ENCODE measurements at regions of chr1 and their contacts with region 1.

Region 1: GRCh38 chr1:200302192-200302920 is 107.5 kb downstream of the ZNF281 start:
- DNase-seq: no peak
- ATAC-seq: no peak
- H3K4me3 ChIP-seq: peak overlapping the region; percentile 46 to 62 (median 56)
- H3K27ac ChIP-seq: no peak overlapping the region
- H3K4me1 ChIP-seq: peaks cover 0 to 4% of the 10 kb centered on the region in 2 donors
- H3K27me3 ChIP-seq: peaks cover 5 to 17% (median 15%) of the 10 kb centered on the region in 3 donors
- CTCF ChIP-seq: no peak
- POLR2A ChIP-seq: no peak

Region 2: DNA sequence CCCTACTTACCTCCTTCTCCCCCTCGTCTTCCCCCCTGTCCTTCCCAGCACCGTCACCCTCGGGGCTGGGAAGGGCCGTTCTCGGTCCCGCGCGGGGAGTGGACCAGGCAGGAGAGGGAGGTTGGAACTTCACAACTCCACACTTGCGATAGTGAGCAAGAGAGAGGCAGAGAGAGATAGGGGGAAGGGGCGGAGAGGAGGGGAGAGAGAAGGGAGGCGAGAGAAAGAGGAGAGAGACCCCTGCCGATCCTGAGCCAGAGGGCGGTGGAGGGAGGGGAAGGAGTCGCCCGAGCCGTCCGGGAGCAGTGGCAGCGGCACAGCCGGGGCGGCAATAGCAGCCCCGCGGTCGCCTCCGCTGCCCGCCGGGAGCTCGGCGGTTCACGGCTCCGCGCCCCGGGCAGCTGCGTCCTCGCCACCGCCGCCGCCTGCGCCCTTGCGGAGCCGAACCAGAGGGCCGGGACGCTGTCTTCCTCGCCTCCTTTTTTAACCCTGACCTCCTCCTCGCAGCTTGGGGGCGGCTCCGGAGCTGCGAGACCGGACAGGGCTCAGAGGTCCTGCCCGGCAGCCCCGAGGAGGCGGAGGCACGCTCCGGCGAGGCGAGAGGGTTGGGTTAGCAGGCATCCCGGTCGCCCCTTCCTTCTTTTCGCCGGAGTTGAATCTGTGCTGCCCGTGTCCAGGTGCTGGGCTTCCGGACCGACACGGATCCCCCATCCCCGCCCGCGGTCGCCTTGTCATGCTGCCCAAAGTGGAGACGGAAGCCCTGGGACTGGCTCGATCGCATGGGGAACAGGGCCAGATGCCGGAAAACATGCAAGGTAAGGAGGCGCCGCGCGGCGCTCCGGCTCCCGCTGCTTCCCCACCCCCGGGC is 263.1 kb before region 1 on chr1:
- in situ Hi-C with region 1: no loop called
- intact Hi-C with region 1: loop called (anchors 10 kb)
- DNase-seq: no peak
- ATAC-seq: peak; percentile 39 to 47
- H3K4me3 ChIP-seq: peak overlapping the region; percentile 53 to 65 (median 56)
- H3K27ac ChIP-seq: peak overlapping the region in 3 of 4 donors; percentile 34 to 56 (median 56)
- H3K4me1 ChIP-seq: peaks cover 24 to 35% of the 10 kb centered on the region in 2 donors
- H3K27me3 ChIP-seq: peaks cover 96 to 100% (median 98%) of the 10 kb centered on the region in 3 donors
- CTCF ChIP-seq: no peak
- POLR2A ChIP-seq: no peak

Region 3: GRCh38 chr1:200139661-200140250 is 162.6 kb before region 1 on chr1:
- in situ Hi-C with region 1: no loop called
- intact Hi-C with region 1: loop called (anchors 1 kb)
- DNase-seq: no peak
- ATAC-seq: peak; percentile 52 to 79
- H3K4me3 ChIP-seq: no peak overlapping the region
- H3K27ac ChIP-seq: no peak overlapping the region
- H3K4me1 ChIP-seq: no peaks in the 10 kb centered on the region
- H3K27me3 ChIP-seq: no peaks in the 10 kb centered on the region
- CTCF ChIP-seq: peak; percentile 31 to 62 (median 50)
- POLR2A ChIP-seq: no peak

Region 4: DNA sequence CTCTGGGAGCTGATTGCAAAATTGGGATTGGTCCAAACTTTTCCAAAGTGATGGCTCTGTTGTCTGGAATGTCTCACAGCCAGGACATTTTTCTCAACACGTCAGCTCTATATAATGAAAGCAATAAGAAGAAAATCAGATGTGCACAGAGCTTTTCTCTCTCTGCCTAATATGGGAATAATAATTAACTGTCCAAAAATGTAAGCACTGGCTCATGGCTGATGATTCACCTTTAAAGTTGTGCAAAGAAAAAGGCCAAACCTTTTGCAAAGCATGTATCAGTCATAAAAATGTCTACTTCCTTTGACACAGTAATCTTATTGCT is 77.0 kb after region 1 on chr1:
- in situ Hi-C with region 1: no loop called
- intact Hi-C with region 1: no loop called
- DNase-seq: no peak
- ATAC-seq: no peak
- H3K4me3 ChIP-seq: no peak overlapping the region
- H3K27ac ChIP-seq: no peak overlapping the region
- H3K4me1 ChIP-seq: no peaks in the 10 kb centered on the region
- H3K27me3 ChIP-seq: no peaks in the 10 kb centered on the region
- CTCF ChIP-seq: no peak
- POLR2A ChIP-seq: no peak

Region 5: DNA sequence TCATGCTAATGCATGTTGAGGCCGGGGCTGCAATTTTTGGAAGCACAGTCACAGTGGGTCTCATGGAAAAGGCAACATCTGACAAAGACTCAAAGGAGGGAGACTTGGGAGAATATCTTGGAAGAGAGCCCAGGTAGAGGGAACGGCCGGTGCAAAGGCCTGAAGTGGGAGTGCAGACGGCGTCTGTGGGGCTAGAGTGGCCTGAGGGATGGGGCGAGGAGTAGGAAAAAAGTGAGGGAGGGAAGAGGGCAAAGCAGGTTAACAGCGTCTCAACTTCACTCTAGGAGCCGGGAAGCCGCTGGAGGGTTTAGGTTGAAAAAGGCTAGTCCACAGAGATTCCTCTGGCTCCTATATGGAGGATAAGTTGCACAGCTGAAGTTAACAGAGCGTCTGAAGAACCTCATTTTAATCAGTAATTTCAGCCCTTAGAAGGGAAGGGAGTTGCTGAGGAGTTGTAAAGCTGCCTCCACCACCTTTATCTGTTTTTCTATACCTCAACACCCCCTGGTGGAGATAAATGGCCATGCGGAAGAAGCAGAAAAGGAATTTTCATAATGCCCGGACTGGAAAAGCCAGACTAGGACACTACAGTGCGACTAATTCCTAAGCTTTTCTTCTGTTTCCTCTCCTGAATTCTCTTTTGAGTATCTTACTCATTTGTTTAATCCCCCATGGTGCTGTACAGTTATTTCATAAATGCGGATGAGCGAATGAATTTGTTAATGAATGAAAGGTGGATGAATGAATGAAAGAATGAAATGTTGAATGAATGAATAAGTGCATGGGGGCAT is 186.2 kb after region 1 on chr1:
- in situ Hi-C with region 1: loop called in 3 of 4 experiments (anchors 25 kb)
- intact Hi-C with region 1: loop called (anchors 10 kb)
- DNase-seq: no peak
- ATAC-seq: peak; percentile 60 to 76
- H3K4me3 ChIP-seq: no peak overlapping the region
- H3K27ac ChIP-seq: no peak overlapping the region
- H3K4me1 ChIP-seq: peaks cover 0 to 6% of the 10 kb centered on the region in 2 donors
- H3K27me3 ChIP-seq: no peaks in the 10 kb centered on the region
- CTCF ChIP-seq: peak; percentile 55 to 83 (median 77)
- POLR2A ChIP-seq: no peak